Activated CD4-positive, alpha-beta memory T cell treated with anti-CD3 and anti-CD28 coated beads, Interleukin-2, amount 10 ng/mL, durations not matched to agents 7 days and 5 days (primary cell): ENCODE measurements at regions of chr11 and their contacts with region 1.

Region 1: DNA sequence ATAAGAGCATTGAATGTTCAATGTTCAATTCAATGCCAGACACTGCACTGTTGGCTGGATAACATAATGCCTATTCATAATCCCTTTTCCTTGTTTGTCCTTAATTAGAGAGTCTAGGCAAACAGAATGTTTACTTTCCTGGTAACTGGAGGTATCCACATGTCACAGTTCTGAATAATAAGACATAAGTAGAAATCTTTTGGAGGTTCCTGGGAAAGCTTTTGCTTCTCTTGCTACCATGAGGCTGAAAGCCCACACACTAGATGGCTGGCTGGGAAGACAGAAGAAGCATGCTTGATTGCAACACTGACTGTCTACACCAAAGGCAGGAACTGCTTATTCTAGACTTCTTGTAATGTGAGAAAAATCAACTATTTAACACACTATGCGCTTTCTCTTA is 79.5 kb downstream of the GAB2 start:
- DNase-seq: no peak
- H3K4me3 Mint-ChIP-seq: no peak overlapping the region
- H3K27ac Mint-ChIP-seq: peak overlapping the region; percentile 89
- H3K4me1 Mint-ChIP-seq: peaks cover 88% of the 10 kb centered on the region
- H3K27me3 Mint-ChIP-seq: no peaks in the 10 kb centered on the region

Region 2: GRCh38 chr11:78325274-78325781 is 12.8 kb before region 1 on chr11:
- CTCF ChIA-PET with region 1: no interaction called
- POLR2A ChIA-PET with region 1: interaction called, 28 read pairs
- DNase-seq: peak; percentile 44
- H3K4me3 Mint-ChIP-seq: no peak overlapping the region
- H3K27ac Mint-ChIP-seq: peak overlapping the region; percentile 93
- H3K4me1 Mint-ChIP-seq: peaks cover 87% of the 10 kb centered on the region
- H3K27me3 Mint-ChIP-seq: no peaks in the 10 kb centered on the region

Region 3: DNA sequence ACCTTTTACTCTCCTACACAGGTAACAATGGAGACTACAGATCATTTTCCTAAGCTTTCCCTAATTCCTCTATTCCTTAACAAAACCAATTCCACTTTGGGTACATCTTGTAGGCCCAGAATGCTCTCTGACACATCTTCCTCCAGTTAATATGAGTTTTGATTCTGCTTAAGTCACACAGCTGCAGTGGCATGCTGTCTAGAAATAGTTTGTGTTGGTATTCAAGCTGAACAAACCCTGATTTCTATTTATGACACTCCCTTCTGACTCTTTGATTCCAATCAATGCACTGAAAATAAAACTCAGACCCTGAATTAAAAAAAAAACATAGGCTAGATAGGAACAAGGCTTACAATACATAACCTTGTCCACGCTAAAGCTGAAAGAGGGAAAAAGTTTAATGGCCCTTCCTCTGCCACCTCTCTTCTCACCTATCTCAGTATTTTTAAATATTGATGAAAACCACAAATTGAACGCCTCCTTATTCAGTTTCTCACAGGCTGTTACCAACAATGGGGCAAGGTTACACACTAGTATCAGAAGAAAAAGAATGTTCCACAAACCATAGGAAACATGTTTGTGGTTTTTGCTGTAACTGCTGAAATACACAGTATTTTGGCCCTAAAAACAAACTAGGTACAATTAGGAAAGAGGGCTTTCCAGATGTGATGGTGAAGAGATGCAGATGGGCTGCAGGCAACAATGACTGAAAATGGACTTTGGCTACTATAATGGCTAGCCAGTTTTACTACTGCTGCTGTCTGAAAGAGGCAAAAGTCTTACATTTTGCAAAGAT is 115.2 kb after region 1 on chr11:
- CTCF ChIA-PET with region 1: no interaction called
- POLR2A ChIA-PET with region 1: no interaction called
- DNase-seq: no peak
- H3K4me3 Mint-ChIP-seq: no peak overlapping the region
- H3K27ac Mint-ChIP-seq: peak overlapping the region; percentile 41
- H3K4me1 Mint-ChIP-seq: peaks cover 25% of the 10 kb centered on the region
- H3K27me3 Mint-ChIP-seq: no peaks in the 10 kb centered on the region